CD8-positive, alpha-beta T cell (primary cell): ENCODE measurements at regions of chr16 and their contacts with region 1.

Region 1: DNA sequence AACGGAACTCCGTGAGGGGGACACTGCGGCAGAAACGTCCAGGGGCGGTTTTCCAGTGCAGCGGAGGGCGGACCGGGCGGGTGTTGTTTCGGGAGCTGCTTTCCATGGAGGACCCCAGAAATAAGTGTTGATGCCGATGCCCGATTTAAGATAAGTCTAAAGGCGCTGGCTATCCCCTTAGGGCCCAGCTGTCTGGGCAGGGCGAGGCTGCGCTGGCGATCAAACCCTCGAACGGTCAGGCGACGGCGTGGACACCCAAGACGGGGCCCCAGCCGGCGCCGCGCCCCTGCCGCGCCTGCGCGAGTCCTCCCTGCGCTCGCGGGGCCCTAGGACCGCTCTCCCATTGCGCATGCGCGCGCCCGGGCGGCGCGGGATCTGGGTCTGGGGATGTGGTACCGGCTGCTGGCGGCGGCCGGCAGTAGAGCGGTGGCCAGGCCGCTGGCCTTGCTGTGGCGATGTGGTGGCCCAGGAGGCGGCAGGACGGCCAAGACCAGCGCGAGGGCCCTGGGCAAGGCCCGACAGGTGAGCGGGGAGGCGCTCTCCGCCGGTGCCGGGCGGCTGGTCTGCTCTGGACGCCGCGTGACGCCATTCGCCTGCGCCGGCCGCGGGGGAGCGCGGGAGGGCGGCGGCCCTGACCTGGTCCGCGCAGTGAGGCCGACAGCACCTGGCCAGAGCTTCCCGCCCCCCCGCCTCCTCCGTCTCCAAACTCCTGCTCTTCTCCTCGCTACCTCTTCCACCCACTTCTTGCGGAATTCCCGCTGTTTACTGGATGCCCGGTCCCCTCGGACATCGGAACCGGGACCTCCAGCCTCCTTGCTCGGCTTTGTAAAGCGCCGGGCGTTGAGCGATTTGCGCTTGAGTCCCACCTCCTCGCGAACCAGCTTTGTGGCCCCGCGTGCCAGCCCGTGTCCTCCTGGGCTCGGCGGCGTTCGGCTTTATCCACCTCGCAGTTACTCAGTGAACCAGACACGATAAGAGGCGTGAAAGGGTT is 24.0 kb downstream of the DEF8 start:
- DNase-seq: peak; percentile 81 to 96 (median 90)
- ATAC-seq: peak; percentile 95
- H3K4me3 ChIP-seq: peak overlapping the region; percentile 73 to 93
- H3K4me3 Mint-ChIP-seq: peak overlapping the region; percentile 98
- H3K27ac ChIP-seq: peak overlapping the region; percentile 77 to 79
- H3K27ac Mint-ChIP-seq: peak overlapping the region; percentile 94
- H3K4me1 ChIP-seq: peaks cover 24% of the 10 kb centered on the region
- H3K4me1 Mint-ChIP-seq: peaks cover 38% of the 10 kb centered on the region
- H3K27me3 ChIP-seq: no peaks in the 10 kb centered on the region
- H3K27me3 Mint-ChIP-seq: no peaks in the 10 kb centered on the region
- CTCF ChIP-seq: no peak

Region 2: DNA sequence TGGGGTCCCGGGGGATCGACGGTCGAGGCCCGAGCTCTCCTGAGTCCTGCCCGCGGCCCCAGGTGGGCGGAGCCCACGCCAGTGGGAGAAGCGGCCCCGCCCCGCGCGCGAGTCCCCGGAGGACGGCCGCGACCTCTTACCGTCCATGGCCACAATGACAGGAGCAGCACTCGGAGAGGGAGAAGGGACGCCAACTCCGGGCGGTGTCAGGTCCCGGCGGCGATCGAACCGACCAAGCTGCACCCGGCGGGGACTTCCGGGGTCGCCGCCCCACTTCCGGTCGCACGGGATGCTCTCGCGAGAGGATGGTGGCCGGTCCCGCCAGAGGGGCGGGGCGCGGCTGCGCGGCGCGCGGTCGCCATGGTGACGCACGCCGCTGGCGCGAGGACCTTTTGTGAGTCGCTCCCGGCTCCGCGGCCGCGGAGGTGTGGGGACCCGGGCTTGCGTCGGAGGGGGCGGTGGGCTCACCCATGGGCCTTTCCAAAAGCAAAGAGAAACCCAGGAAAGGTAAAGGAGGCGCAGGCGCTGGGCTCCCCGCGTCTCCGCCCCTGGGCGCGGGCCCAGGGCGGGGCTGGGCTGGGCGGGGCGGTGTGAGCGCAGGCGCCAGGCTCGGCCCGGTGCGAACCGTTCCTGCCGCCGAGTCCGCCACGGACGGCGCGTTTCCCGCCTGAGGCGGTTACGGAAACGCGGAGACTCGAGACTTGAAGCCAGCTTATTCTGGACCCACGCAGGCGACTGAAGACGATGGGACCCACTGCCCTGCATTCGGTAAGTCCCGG is 314.9 kb before region 1 on chr16 and contains the starts of genes CHMP1A and SPATA33:
- CTCF ChIA-PET with region 1: no interaction called
- POLR2A ChIA-PET with region 1: no interaction called
- intact Hi-C with region 1: loop called in 1 of 2 experiments (anchors 5 kb)
- DNase-seq: peak; percentile 85 to 97 (median 91)
- ATAC-seq: peak; percentile 88
- H3K4me3 ChIP-seq: peak within 1 kb of the TSS; percentile 73 to 91
- H3K4me3 Mint-ChIP-seq: peak within 1 kb of the TSS; percentile 80
- H3K27ac ChIP-seq: peak within 1 kb of the TSS; percentile 81 to 85
- H3K27ac Mint-ChIP-seq: peak within 1 kb of the TSS; percentile 64
- H3K4me1 ChIP-seq: peaks cover 19% of the 10 kb centered on the region
- H3K4me1 Mint-ChIP-seq: peaks cover 29% of the 10 kb centered on the region
- H3K27me3 ChIP-seq: no peaks in the 10 kb centered on the region
- H3K27me3 Mint-ChIP-seq: no peaks in the 10 kb centered on the region
- CTCF ChIP-seq: no peak
- total RNA-seq, gene CHMP1A: 82.9 to 90.8 TPM
- total RNA-seq, gene SPATA33: 4.8 to 5.1 TPM

Region 3: GRCh38 chr16:89686520-89687091 is 285.9 kb before region 1 on chr16 and contains the start of gene CDK10:
- CTCF ChIA-PET with region 1: no interaction called
- POLR2A ChIA-PET with region 1: no interaction called
- intact Hi-C with region 1: loop called in 1 of 2 experiments (anchors 2 kb)
- DNase-seq: peak; percentile 76 to 94 (median 88)
- ATAC-seq: peak; percentile 92
- H3K4me3 ChIP-seq: peak within 1 kb of the TSS; percentile 79 to 98
- H3K4me3 Mint-ChIP-seq: peak within 1 kb of the TSS; percentile 89
- H3K27ac ChIP-seq: peak within 1 kb of the TSS; percentile 76 to 84
- H3K27ac Mint-ChIP-seq: peak within 1 kb of the TSS; percentile 92
- H3K4me1 ChIP-seq: peaks cover 15% of the 10 kb centered on the region
- H3K4me1 Mint-ChIP-seq: peaks cover 14% of the 10 kb centered on the region
- H3K27me3 ChIP-seq: no peaks in the 10 kb centered on the region
- H3K27me3 Mint-ChIP-seq: no peaks in the 10 kb centered on the region
- CTCF ChIP-seq: no peak
- total RNA-seq, gene CDK10: 67.0 to 73.1 TPM

Region 4: GRCh38 chr16:89860747-89861304 is 111.7 kb before region 1 on chr16:
- CTCF ChIA-PET with region 1: no interaction called
- POLR2A ChIA-PET with region 1: no interaction called
- intact Hi-C with region 1: no loop called
- DNase-seq: peak; percentile 61 to 87 (median 76)
- ATAC-seq: peak; percentile 92
- H3K4me3 ChIP-seq: no peak overlapping the region
- H3K4me3 Mint-ChIP-seq: no peak overlapping the region
- H3K27ac ChIP-seq: no peak overlapping the region
- H3K27ac Mint-ChIP-seq: no peak overlapping the region
- H3K4me1 ChIP-seq: peaks cover 30% of the 10 kb centered on the region
- H3K4me1 Mint-ChIP-seq: peaks cover 29% of the 10 kb centered on the region
- H3K27me3 ChIP-seq: peaks cover 0 to 2% of the 10 kb centered on the region in 2 experiments
- H3K27me3 Mint-ChIP-seq: no peaks in the 10 kb centered on the region
- CTCF ChIP-seq: peak; percentile 98

Region 5: DNA sequence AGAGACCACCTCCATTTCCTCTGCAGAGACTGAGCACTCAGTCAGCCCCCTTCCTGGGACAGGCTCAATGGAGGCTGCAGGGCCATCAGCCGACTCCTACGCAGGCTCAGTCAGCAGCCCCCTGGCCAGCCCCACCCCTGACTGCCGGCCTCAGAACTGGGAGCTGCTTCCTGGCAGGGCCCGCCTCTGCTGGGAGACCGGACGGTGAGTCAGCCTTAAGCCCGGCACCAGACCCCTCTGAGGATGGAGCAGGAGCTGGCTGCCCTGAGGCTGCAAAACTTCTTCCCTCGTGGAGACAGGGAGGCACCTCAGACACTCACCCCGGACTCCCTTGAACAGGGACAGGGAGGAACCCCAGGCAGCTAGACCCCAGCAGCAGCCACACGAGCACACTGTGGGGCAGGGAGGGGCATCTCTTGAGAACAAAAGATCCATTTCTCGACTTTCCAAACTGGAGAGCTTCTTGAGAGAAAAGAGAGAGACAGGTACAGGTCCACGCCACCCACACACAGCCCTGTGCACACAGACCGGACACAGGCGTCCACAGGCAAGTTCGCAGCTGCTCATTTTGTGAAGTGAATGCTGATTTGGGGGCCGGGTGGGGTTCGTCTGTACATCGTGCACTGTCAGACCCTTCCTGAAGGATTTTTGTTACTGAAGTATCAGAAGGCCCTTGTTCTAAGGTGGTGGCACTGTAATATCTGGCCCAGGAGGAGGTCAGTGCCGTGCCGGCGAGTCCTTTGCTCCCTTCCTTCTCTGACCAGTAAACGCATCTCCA is 50.7 kb before region 1 on chr16:
- CTCF ChIA-PET with region 1: no interaction called
- POLR2A ChIA-PET with region 1: no interaction called
- intact Hi-C with region 1: loop called in 1 of 2 experiments (anchors 1 kb)
- DNase-seq: no peak
- ATAC-seq: no peak
- H3K4me3 ChIP-seq: no peak overlapping the region
- H3K4me3 Mint-ChIP-seq: peak overlapping the region; percentile 47
- H3K27ac ChIP-seq: no peak overlapping the region
- H3K27ac Mint-ChIP-seq: no peak overlapping the region
- H3K4me1 ChIP-seq: peaks cover 57% of the 10 kb centered on the region
- H3K4me1 Mint-ChIP-seq: peaks cover 47% of the 10 kb centered on the region
- H3K27me3 ChIP-seq: peaks cover 22 to 53% of the 10 kb centered on the region in 2 experiments
- H3K27me3 Mint-ChIP-seq: peaks cover 30% of the 10 kb centered on the region
- CTCF ChIP-seq: no peak

Region 6: DNA sequence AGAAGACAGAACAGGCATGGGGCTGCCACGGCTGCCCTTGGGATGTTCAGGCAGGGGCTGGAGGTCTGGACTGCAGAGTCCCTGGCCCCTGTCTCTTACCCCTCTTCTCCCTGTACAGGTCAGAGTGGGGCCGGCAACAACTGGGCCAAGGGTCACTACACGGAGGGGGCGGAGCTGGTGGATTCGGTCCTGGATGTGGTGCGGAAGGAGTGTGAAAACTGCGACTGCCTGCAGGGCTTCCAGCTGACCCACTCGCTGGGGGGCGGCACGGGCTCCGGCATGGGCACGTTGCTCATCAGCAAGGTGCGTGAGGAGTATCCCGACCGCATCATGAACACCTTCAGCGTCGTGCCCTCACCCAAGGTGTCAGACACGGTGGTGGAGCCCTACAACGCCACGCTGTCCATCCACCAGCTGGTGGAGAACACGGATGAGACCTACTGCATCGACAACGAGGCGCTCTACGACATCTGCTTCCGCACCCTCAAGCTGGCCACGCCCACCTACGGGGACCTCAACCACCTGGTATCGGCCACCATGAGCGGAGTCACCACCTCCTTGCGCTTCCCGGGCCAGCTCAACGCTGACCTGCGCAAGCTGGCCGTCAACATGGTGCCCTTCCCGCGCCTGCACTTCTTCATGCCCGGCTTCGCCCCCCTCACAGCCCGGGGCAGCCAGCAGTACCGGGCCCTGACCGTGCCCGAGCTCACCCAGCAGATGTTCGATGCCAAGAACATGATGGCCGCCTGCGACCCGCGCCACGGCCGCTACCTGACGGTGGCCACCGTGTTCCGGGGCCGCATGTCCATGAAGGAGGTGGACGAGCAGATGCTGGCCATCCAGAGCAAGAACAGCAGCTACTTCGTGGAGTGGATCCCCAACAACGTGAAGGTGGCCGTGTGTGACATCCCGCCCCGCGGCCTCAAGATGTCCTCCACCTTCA is 37.7 kb before region 1 on chr16:
- CTCF ChIA-PET with region 1: no interaction called
- POLR2A ChIA-PET with region 1: no interaction called
- intact Hi-C with region 1: no loop called
- DNase-seq: no peak
- ATAC-seq: no peak
- H3K4me3 ChIP-seq: no peak overlapping the region
- H3K4me3 Mint-ChIP-seq: no peak overlapping the region
- H3K27ac ChIP-seq: no peak overlapping the region
- H3K27ac Mint-ChIP-seq: no peak overlapping the region
- H3K4me1 ChIP-seq: no peaks in the 10 kb centered on the region
- H3K4me1 Mint-ChIP-seq: no peaks in the 10 kb centered on the region
- H3K27me3 ChIP-seq: peaks cover 0 to 5% of the 10 kb centered on the region in 2 experiments
- H3K27me3 Mint-ChIP-seq: peaks cover 7% of the 10 kb centered on the region
- CTCF ChIP-seq: no peak

Region 7: DNA sequence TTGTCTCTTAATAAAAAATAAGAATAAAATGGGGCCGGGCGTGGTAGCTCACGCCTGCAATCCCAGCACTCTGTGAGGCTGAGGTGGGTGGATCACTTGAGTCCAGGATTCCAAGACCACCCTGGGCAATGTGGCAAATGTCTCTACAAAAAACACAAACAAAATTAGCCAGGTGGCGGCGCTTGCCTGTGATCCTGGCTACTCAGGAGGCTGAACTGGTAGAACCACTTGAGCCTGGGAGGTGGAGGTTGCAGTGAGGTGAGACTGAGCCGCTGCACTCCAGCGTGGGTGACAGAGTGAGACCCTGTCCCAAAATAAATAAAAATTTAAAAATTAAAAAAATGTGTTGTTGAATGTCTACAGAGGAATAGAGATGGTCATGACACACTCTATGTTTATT is 26.9 kb before region 1 on chr16:
- CTCF ChIA-PET with region 1: no interaction called
- POLR2A ChIA-PET with region 1: interaction called, 5 read pairs
- intact Hi-C with region 1: loop called (anchors 1 kb)
- DNase-seq: no peak
- ATAC-seq: no peak
- H3K4me3 ChIP-seq: no peak overlapping the region
- H3K4me3 Mint-ChIP-seq: no peak overlapping the region
- H3K27ac ChIP-seq: no peak overlapping the region
- H3K27ac Mint-ChIP-seq: no peak overlapping the region
- H3K4me1 ChIP-seq: peaks cover 14% of the 10 kb centered on the region
- H3K4me1 Mint-ChIP-seq: peaks cover 9% of the 10 kb centered on the region
- H3K27me3 ChIP-seq: peaks cover 0 to 7% of the 10 kb centered on the region in 2 experiments
- H3K27me3 Mint-ChIP-seq: peaks cover 25% of the 10 kb centered on the region
- CTCF ChIP-seq: no peak

Region 8: DNA sequence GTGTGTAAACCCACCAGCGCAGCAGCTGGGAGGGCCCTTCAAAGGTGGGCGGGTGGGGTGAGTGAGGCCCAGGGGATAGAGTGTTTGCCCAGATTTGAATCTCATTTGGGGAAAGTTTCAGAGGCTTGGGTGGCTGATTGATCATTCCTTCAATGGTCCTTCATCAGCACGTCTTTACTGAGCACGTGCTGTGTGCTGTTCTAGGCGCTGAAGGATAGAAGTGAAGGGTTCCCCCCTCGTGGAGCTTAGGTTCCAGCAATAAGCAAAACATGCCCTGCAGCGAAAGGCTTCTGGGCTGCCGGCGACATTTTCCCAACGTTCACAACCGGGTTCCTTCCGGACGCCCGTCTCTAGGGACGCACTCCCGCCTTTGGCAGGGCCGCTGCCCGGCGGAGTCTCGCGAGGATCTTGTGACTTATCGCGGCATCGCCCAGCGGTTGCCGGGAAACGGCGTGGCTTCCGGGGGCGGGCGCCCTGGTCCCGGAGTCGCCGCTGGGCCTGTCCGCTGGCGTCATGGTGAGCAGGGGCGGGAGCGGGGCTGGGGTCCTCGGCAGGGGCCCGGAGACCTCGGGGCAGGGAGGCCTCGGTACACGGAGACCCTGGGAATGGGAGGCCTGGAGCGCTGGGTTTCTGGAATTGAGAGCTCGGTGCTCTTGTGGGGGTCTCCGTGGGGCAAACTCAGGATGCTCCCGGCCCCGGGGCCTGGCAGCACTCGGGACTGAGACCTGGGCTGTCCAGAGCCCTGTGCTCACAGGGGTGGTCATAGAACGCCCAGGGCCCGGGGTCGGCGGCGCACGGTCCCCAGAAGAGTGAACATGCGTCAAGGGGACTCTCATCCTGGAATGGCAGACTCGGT is 49.9 kb after region 1 on chr16:
- CTCF ChIA-PET with region 1: no interaction called
- POLR2A ChIA-PET with region 1: no interaction called
- intact Hi-C with region 1: loop called (anchors 2 to 5 kb)
- DNase-seq: peak; percentile 43 to 84 (median 71)
- ATAC-seq: peak; percentile 67
- H3K4me3 ChIP-seq: peak overlapping the region; percentile 45 to 63
- H3K4me3 Mint-ChIP-seq: peak overlapping the region; percentile 74
- H3K27ac ChIP-seq: no peak overlapping the region
- H3K27ac Mint-ChIP-seq: no peak overlapping the region
- H3K4me1 ChIP-seq: peaks cover 31% of the 10 kb centered on the region
- H3K4me1 Mint-ChIP-seq: peaks cover 26% of the 10 kb centered on the region
- H3K27me3 ChIP-seq: no peaks in the 10 kb centered on the region
- H3K27me3 Mint-ChIP-seq: no peaks in the 10 kb centered on the region
- CTCF ChIP-seq: no peak

Region 9: DNA sequence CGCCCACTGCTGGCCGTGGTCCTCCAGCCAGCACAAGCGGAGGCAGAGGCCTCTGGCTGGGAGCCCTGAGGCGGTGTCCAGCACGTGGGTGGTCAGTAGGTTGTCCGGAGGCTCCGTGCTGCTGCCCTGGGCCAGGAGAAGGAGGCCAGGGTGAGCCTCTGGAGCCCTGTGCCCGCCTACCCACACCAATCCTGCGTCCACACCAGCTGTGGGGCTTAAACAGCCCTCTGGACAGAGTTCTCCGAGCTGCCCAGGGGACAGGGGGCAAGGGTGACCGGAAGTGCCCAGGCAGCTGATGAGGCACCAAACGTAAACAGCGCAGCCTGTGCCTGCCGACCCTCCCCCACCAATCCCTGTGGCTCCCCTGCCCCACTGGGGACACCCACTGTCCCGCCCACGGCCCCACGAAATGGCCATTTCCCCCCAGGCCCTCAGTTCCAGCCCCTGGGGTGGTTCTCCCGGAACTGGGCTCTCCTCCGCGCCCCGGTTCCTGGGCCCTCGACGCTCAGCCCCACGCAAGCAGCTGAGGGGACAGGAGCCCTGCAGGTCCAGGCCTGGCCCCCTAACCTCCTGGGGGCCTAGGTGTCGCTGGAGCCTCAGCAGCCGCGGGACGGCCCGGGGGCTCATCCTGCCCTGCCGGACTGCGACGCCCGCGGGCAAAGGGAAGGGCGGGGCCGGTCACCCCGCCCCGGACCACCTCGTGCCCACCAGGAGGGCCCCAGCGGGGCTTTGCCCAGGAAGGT is 74.6 kb after region 1 on chr16:
- CTCF ChIA-PET with region 1: no interaction called
- POLR2A ChIA-PET with region 1: no interaction called
- intact Hi-C with region 1: loop called in 1 of 2 experiments (anchors 5 kb)
- DNase-seq: peak in 2 of 9 experiments; percentile 18 to 39
- ATAC-seq: peak; percentile 25
- H3K4me3 ChIP-seq: peak overlapping the region; percentile 12 to 15
- H3K4me3 Mint-ChIP-seq: no peak overlapping the region
- H3K27ac ChIP-seq: no peak overlapping the region
- H3K27ac Mint-ChIP-seq: no peak overlapping the region
- H3K4me1 ChIP-seq: peaks cover 10% of the 10 kb centered on the region
- H3K4me1 Mint-ChIP-seq: peaks cover 7% of the 10 kb centered on the region
- H3K27me3 ChIP-seq: peaks cover 0 to 9% of the 10 kb centered on the region in 2 experiments
- H3K27me3 Mint-ChIP-seq: peaks cover 13% of the 10 kb centered on the region
- CTCF ChIP-seq: no peak